ENCODE measurements at regions of chr12 and their contacts with region 1.

Region 1: GRCh38 chr12:5200278-5201087 is 156.8 kb downstream of the KCNA5 start:
- DNase-seq: peak; percentile 72
- ATAC-seq: no peak
- H3K4me3 Mint-ChIP-seq: no peak overlapping the region
- H3K27ac Mint-ChIP-seq: no peak overlapping the region
- H3K4me1 Mint-ChIP-seq: no peaks in the 10 kb centered on the region
- H3K27me3 Mint-ChIP-seq: peaks cover 17% of the 10 kb centered on the region

Region 2: GRCh38 chr12:5258498-5258897 is 58.0 kb after region 1 on chr12:
- CTCF ChIA-PET with region 1: no interaction called
- POLR2A ChIA-PET with region 1: no interaction called
- intact Hi-C with region 1: no loop called
- DNase-seq: no peak
- ATAC-seq: no peak
- H3K4me3 Mint-ChIP-seq: no peak overlapping the region
- H3K27ac Mint-ChIP-seq: no peak overlapping the region
- H3K4me1 Mint-ChIP-seq: no peaks in the 10 kb centered on the region
- H3K27me3 Mint-ChIP-seq: peaks cover 7% of the 10 kb centered on the region

Region 3: DNA sequence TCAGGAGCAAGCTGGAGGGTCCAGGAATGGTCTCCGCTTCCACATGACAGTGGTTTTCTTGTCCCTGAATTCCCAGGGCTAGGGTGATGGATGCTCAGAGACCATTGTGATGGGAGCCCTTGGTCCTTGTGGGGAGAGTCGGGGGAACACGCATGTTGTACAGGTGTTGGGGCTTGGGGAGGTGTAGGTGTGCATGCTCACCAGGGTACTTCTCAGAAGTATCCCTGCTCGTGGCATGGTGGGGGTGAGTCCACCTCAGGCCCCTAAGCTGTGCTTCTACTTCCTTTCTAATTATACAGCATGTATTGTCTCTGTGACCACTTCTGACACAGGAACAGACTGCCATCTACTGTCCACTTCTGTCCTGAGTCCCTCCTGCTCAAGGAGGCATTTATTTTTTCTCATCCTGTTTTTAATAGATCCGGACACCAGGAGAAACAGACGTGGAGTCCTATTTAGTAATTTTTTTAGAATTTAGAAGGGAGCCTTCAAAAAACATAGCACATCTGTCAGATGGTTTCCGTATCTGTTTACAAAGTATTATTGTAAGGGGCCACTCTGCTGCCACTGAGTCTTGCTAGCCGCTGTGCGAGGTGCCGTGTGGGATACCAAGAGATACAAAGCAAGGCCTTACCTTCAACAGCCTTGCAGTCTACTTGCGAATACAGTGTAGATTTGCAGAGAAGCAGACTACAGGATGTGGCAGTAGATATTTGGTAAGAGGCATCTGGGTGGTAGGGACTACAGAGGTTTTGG is 241.9 kb after region 1 on chr12:
- CTCF ChIA-PET with region 1: no interaction called
- POLR2A ChIA-PET with region 1: no interaction called
- intact Hi-C with region 1: loop called in 1 of 2 experiments (anchors 1 kb)
- DNase-seq: no peak
- ATAC-seq: no peak
- H3K4me3 Mint-ChIP-seq: no peak overlapping the region
- H3K27ac Mint-ChIP-seq: no peak overlapping the region
- H3K4me1 Mint-ChIP-seq: no peaks in the 10 kb centered on the region
- H3K27me3 Mint-ChIP-seq: peaks cover 35% of the 10 kb centered on the region

Region 4: GRCh38 chr12:5499566-5500330 is 299.3 kb after region 1 on chr12:
- CTCF ChIA-PET with region 1: no interaction called
- POLR2A ChIA-PET with region 1: no interaction called
- intact Hi-C with region 1: loop called in 1 of 2 experiments (anchors 10 kb)
- DNase-seq: no peak
- ATAC-seq: no peak
- H3K4me3 Mint-ChIP-seq: no peak overlapping the region
- H3K27ac Mint-ChIP-seq: no peak overlapping the region
- H3K4me1 Mint-ChIP-seq: no peaks in the 10 kb centered on the region
- H3K27me3 Mint-ChIP-seq: peaks cover 7% of the 10 kb centered on the region

Region 5: DNA sequence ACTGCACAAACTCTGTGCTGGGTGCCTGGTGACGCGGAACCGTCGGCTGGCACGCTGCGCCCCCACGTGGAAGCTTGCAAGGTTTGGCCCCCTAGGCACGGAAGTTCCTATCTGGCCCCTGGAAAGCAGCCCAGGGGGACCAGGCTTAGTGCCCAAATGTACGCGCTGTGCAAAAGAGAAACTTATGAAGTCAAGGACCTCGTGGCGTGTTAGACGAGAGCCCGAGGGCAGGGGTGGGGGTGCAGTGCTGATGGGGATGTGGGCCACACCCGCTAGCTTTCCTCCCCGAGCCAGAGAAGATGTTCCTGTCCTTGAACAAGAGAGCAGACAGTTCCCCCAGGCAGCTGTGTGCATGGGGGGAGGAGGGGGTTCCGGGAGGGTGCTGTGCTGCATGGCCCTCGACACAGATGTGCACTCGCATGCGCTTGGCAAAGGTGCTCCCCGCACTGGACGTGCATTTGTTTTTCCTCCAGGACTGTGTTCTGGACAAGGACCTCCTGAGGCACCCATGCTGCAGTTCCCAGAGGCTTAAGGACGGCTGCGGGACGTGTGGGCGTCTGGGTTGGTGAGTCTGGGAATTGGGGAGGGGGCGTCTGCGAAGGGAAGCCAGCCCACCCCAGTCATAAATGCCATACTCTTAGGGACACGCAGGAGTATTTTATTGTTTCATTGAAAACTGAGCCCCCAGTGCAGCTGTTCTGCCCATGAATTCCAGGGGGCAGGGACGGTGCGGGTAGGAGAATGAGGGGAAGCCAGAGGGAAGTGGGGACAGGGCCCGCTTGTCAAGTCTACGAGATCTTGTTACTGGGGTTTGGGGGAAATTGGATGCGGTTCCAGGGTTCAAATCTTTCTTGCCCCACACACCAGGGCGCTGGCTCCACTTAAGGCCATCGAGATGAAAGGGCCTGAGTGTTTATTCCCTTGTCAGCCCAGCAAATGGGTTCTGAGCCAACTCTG is 311.4 kb after region 1 on chr12:
- CTCF ChIA-PET with region 1: no interaction called
- POLR2A ChIA-PET with region 1: no interaction called
- intact Hi-C with region 1: loop called (anchors 10 kb)
- DNase-seq: peak; percentile 50
- ATAC-seq: no peak
- H3K4me3 Mint-ChIP-seq: no peak overlapping the region
- H3K27ac Mint-ChIP-seq: no peak overlapping the region
- H3K4me1 Mint-ChIP-seq: no peaks in the 10 kb centered on the region
- H3K27me3 Mint-ChIP-seq: peaks cover 8% of the 10 kb centered on the region

Region 6: GRCh38 chr12:5556039-5556614 is 355.6 kb after region 1 on chr12:
- CTCF ChIA-PET with region 1: no interaction called
- POLR2A ChIA-PET with region 1: no interaction called
- intact Hi-C with region 1: loop called in 1 of 2 experiments (anchors 2 kb)
- DNase-seq: peak; percentile 43
- ATAC-seq: no peak
- H3K4me3 Mint-ChIP-seq: no peak overlapping the region
- H3K27ac Mint-ChIP-seq: no peak overlapping the region
- H3K4me1 Mint-ChIP-seq: no peaks in the 10 kb centered on the region
- H3K27me3 Mint-ChIP-seq: peaks cover 5% of the 10 kb centered on the region